ENCODE measurements at regions of chr2 and their contacts with region 1.

Region 1: DNA sequence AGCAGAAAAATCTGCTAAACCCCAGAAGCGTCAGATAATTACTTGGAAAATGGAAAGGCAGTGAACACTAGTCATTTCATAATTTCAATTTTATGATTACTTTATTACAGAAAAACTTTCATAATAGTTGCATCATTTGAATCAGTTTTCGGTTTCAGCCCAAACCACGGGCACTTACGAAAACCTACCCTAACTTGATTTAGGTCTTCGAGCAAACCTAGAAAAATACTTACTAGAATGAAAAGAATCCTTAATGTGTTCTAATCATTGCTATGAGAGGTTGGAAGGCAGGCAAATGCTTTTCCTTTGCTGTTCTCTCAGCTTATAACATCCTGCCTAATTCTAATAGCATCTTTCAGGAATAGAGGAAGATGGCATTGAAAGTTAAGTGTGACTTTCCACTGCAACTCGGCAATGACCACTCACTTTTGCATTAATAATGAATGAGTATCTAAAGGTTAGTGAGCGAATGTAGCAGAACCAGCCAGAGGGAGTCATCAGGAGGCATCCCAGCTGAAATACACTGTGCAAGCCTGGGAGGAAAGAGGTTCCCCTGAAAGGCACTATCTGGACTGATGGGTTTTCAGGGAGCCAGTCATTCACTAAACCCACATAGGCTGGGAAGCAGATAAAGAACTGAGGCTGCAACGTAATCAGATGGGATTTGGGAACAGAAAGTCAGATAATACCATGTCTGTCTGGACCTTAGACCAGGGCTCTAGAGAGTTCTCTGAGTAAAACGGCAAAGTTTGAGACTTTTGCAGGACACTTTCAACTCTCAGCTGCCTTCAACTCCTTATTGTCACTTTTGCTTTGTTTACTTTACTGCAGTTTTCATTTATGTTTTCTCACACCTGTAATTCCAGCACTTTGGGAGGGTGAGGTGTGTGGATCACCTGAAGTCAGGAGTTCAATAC is 520.8 kb downstream of the RNF144A start:
- DNase-seq: peak; percentile 65
- H3K4me3 Mint-ChIP-seq: peak overlapping the region; percentile 29
- H3K27ac Mint-ChIP-seq: peak overlapping the region; percentile 91
- H3K4me1 Mint-ChIP-seq: peaks cover 74% of the 10 kb centered on the region
- H3K27me3 Mint-ChIP-seq: peaks cover 7% of the 10 kb centered on the region

Region 2: DNA sequence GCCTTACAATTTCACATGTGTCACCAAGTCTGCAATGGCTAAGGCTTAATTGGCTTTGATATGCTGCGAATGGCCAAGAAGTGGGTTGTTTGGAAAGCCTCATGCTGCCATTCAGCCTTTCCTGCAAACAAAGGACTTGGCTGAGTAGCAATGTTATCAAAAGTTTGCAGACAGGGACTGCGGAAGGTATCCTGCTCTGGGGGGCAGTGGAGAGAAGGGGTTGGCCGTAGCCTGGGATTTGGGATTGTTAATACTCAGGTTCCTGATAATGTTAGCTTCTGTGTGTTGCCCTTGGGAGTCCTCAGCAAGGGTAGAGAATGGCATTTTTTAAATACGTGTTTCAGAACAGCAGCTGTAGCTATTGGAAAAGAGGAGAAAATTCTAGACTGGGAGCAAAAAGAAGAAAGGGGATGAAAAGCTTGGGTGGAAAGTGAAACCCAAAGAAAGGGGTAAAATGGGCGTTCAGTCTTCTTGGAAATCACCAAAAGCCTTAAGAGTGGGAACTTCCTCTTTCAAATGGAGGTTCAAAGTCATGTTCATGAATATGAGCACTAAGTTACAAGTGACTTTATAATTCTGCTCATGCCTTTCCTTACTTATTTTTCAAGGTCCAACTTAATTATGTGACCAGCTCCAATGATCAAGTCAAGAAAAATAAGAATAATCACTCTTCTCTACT is 195.6 kb before region 1 on chr2:
- CTCF ChIA-PET with region 1: no interaction called
- POLR2A ChIA-PET with region 1: no interaction called
- intact Hi-C with region 1: no loop called
- DNase-seq: no peak
- H3K4me3 Mint-ChIP-seq: no peak overlapping the region
- H3K27ac Mint-ChIP-seq: no peak overlapping the region
- H3K4me1 Mint-ChIP-seq: no peaks in the 10 kb centered on the region
- H3K27me3 Mint-ChIP-seq: no peaks in the 10 kb centered on the region

Region 3: DNA sequence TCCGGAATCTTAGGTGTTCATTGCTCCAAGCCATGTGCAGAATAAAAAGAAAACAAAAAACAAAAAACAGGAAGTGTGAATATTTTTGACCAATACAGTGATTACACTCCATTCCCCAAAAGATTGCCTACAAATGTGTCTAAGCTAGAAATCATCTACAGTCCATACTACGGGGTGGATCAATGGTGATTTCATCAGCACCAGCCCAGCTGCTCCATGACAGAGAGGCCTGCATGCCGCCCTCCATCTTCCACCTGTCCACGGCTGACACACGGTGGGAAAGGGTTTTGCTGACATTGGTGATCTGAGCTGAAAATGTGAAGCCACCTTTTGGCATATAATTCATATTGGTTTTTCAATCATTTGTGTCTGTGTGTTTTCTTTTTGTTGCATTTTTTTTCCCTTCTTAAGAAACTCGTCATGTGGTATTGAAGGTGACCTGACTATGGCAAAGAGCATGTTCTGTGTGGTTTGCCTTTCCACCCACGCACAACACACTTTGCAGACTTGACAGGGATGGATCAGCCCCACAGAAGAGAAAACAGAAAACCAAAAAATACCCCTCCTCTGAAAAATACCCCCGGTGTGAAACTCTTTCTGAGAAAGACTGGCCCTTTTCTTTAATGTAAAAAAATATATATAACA is 12.3 kb after region 1 on chr2:
- CTCF ChIA-PET with region 1: interaction called, 6 read pairs
- POLR2A ChIA-PET with region 1: interaction called, 12 read pairs
- intact Hi-C with region 1: loop called (anchors 1 kb)
- DNase-seq: peak; percentile 84
- H3K4me3 Mint-ChIP-seq: peak overlapping the region; percentile 47
- H3K27ac Mint-ChIP-seq: peak overlapping the region; percentile 89
- H3K4me1 Mint-ChIP-seq: peaks cover 68% of the 10 kb centered on the region
- H3K27me3 Mint-ChIP-seq: no peaks in the 10 kb centered on the region

Region 4: DNA sequence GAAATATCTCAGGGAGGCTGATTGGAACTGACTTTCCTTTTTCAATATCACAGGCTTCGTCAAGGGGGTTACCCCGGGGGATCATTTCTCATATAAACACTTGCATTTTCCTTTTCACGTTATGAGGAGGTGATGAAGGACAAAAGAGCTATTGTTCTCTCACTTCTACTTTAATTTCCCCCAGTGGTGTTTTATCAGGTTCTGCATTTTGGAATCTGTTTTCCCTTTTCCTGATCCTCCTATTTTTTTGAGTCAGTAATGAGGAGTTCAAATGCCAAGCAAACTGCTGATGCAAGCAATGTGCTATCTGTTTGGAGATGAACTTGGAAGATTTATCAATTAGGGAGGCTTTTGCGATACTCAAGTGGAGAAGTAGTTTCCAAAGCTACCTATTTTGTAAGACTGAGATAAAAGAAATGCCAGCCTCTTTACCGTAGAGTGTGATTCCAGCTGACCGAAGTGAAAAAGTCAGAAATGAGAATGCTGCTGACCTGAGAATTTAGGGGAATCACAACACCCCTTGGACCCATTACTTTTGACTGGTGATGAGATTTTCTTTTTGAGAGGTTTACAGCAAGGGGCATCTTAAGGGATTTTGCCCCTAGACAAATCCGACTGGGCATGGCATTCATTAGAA is 35.3 kb after region 1 on chr2:
- CTCF ChIA-PET with region 1: no interaction called
- POLR2A ChIA-PET with region 1: no interaction called
- intact Hi-C with region 1: loop called (anchors 1 kb)
- DNase-seq: no peak
- H3K4me3 Mint-ChIP-seq: no peak overlapping the region
- H3K27ac Mint-ChIP-seq: peak overlapping the region; percentile 71
- H3K4me1 Mint-ChIP-seq: peaks cover 48% of the 10 kb centered on the region
- H3K27me3 Mint-ChIP-seq: peaks cover 1% of the 10 kb centered on the region

Region 5: DNA sequence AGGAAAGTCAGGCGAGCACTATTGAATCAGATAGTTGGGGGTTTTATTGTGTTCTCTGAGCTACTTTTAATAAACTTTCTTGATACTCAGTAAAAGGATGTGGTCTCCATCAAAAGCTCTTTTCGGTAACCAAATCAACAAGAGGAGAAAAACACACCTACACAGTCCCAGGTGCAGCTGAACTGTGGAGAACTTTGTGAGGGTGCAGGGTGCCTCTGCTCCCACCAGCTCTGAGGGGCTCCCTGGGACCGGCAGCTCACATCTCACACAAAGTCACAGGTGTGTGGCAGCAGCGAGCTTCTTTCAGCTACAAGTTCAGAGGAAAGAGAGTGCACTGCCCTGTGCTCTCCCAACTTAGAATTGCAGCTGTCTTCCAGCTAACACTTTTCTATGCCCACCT is 129.7 kb after region 1 on chr2:
- CTCF ChIA-PET with region 1: interaction called, 3 read pairs
- POLR2A ChIA-PET with region 1: interaction called, 6 read pairs
- intact Hi-C with region 1: loop called (anchors 1 kb)
- DNase-seq: peak; percentile 78
- H3K4me3 Mint-ChIP-seq: peak overlapping the region; percentile 23
- H3K27ac Mint-ChIP-seq: peak overlapping the region; percentile 84
- H3K4me1 Mint-ChIP-seq: peaks cover 64% of the 10 kb centered on the region
- H3K27me3 Mint-ChIP-seq: no peaks in the 10 kb centered on the region

Region 6: DNA sequence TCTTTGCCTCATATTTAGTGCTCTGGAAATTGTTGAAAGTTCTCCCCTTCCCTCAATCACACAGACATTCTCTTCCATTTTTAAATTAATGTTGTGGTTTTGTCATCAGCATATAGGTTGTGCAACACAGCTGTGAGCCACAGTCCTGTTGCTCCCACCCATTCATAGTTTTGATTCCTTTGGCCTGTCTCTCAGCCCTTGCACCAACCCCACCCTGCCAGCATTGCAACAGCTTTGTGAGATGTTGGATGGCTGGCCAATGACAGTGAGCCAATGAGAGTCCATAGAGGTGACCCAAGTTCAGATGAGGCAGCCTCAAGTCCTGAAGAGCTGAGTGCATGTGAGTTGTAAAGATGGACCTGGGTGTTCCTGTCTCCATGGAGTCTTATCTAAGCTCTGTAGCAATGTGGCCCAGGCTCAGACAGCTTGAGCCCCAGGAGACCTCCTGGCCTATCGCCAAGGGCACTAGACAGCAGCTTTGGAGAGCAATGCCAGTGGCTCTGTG is 254.7 kb after region 1 on chr2:
- CTCF ChIA-PET with region 1: no interaction called
- POLR2A ChIA-PET with region 1: no interaction called
- intact Hi-C with region 1: loop called (anchors 2 kb)
- DNase-seq: no peak
- H3K4me3 Mint-ChIP-seq: peak overlapping the region; percentile 6
- H3K27ac Mint-ChIP-seq: no peak overlapping the region
- H3K4me1 Mint-ChIP-seq: peaks cover 37% of the 10 kb centered on the region
- H3K27me3 Mint-ChIP-seq: peaks cover 3% of the 10 kb centered on the region

Region 7: GRCh38 chr2:7744827-7745226 is 306.9 kb after region 1 on chr2:
- CTCF ChIA-PET with region 1: no interaction called
- POLR2A ChIA-PET with region 1: interaction called, 3 read pairs
- intact Hi-C with region 1: loop called (anchors 5 kb)
- DNase-seq: peak; percentile 76
- H3K4me3 Mint-ChIP-seq: no peak overlapping the region
- H3K27ac Mint-ChIP-seq: peak overlapping the region; percentile 64
- H3K4me1 Mint-ChIP-seq: peaks cover 32% of the 10 kb centered on the region
- H3K27me3 Mint-ChIP-seq: no peaks in the 10 kb centered on the region

Region 8: GRCh38 chr2:8488001-8488738 is 1050.2 kb after region 1 on chr2:
- CTCF ChIA-PET with region 1: no interaction called
- POLR2A ChIA-PET with region 1: no interaction called
- intact Hi-C with region 1: loop called (anchors 1 kb)
- DNase-seq: peak; percentile 88
- H3K4me3 Mint-ChIP-seq: peak overlapping the region; percentile 77
- H3K27ac Mint-ChIP-seq: peak overlapping the region; percentile 91
- H3K4me1 Mint-ChIP-seq: peaks cover 72% of the 10 kb centered on the region
- H3K27me3 Mint-ChIP-seq: no peaks in the 10 kb centered on the region